HEK293 (cell line): ENCODE measurements at regions of chr16 and their contacts with region 1.

Region 1: GRCh38 chr16:4298761-4299522 is 16.9 kb upstream of the GLIS2 start:
- H3K4me3 ChIP-seq: no peak overlapping the region
- H3K27ac ChIP-seq: no peak overlapping the region
- H3K4me1 ChIP-seq: peaks cover 4% of the 10 kb centered on the region; the same call in 1 of the 2 replicates
- CTCF ChIP-seq: no peak

Region 2: DNA sequence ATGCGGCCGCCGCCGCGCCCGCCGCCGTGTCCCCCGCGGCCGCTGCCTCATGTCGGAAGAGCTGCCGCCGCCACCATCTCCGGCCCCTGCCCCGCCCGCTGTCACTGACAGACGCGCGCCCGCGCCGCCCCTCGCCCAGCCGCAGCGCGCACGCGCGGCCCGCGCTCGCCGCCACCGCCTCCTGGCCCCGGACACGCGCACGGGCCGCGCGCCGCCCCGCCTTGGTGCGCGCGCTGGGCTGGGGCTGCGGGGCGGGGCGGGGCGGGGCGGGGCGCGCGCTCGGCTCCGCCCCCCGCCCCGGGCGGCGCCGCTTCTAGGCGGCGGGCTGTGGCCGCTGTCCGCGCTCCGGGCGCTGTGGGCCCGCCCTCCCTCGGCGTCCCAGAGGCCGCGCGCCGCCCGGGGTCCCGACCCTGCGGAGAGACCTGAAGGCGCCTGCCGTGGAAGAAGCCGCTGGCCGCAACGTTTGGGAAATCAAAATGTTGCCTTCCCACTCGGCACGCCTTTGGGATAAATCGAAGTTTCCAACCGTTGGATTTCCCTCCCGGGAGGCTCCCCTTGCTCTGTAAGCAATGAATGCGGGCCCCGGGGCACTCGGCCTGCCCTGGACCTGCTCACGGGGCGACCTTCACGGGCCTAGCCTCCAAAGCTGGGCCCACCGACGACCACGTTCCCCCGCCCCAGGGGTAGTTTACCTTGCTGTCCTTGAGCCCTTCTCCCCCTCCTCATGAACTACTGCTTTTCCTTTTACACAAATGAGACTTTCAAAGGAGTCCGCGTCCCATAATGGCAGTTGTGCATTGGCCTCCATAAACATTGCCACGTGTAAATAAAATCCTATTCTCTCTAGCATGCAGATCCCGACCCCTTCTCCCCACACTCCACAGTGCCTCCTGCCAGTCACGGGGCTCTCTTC is 182.3 kb before region 1 on chr16 and contains the start of gene ADCY9:
- CTCF ChIA-PET with region 1: no interaction called
- POLR2A ChIA-PET with region 1: no interaction called
- H3K4me3 ChIP-seq: peak within 1 kb of the TSS; percentile 51
- H3K27ac ChIP-seq: peak within 1 kb of the TSS; percentile 48; the same call in 1 of the 2 replicates
- H3K4me1 ChIP-seq: peaks cover 10% of the 10 kb centered on the region
- CTCF ChIP-seq: 0 out of 2 replicates have a peak, but pooled peaks have one; percentile 9

Region 3: GRCh38 chr16:4208341-4208751 is 90.6 kb before region 1 on chr16:
- CTCF ChIA-PET with region 1: no interaction called
- POLR2A ChIA-PET with region 1: no interaction called
- H3K4me3 ChIP-seq: no peak overlapping the region
- H3K27ac ChIP-seq: no peak overlapping the region
- H3K4me1 ChIP-seq: no peaks in the 10 kb centered on the region
- CTCF ChIP-seq: no peak

Region 4: GRCh38 chr16:4261557-4262172 is 37.3 kb before region 1 on chr16:
- CTCF ChIA-PET with region 1: no interaction called
- POLR2A ChIA-PET with region 1: no interaction called
- H3K4me3 ChIP-seq: no peak overlapping the region
- H3K27ac ChIP-seq: no peak overlapping the region
- H3K4me1 ChIP-seq: no peaks in the 10 kb centered on the region
- CTCF ChIP-seq: peak; percentile 56

Region 5: GRCh38 chr16:4288148-4288921 is 10.6 kb before region 1 on chr16:
- CTCF ChIA-PET with region 1: interaction called, 35 read pairs
- POLR2A ChIA-PET with region 1: interaction called, 5 read pairs
- H3K4me3 ChIP-seq: no peak overlapping the region; the same call in 1 of the 2 replicates
- H3K27ac ChIP-seq: no peak overlapping the region
- H3K4me1 ChIP-seq: no peaks in the 10 kb centered on the region
- CTCF ChIP-seq: peak; percentile 92

Region 6: GRCh38 chr16:4309836-4310266 is 10.9 kb after region 1 on chr16:
- CTCF ChIA-PET with region 1: interaction called, 12 read pairs
- POLR2A ChIA-PET with region 1: interaction called, 3 read pairs
- H3K4me3 ChIP-seq: no peak overlapping the region
- H3K27ac ChIP-seq: no peak overlapping the region
- H3K4me1 ChIP-seq: no peaks in the 10 kb centered on the region
- CTCF ChIP-seq: peak; percentile 68; the same call in 1 of the 2 replicates

Region 7: GRCh38 chr16:4330277-4330874 is 31.4 kb after region 1 on chr16:
- CTCF ChIA-PET with region 1: interaction called, 15 read pairs
- POLR2A ChIA-PET with region 1: interaction called, 3 read pairs
- H3K4me3 ChIP-seq: no peak overlapping the region
- H3K27ac ChIP-seq: no peak overlapping the region
- H3K4me1 ChIP-seq: no peaks in the 10 kb centered on the region
- CTCF ChIP-seq: peak; percentile 60